HEK293 (cell line): ENCODE measurements at regions of chr19 and their contacts with region 1.

Region 1: GRCh38 chr19:27966390-27966816 is 1246.5 kb downstream of the UQCRFS1 start:
- H3K4me3 ChIP-seq: no peak overlapping the region
- H3K27ac ChIP-seq: no peak overlapping the region
- H3K4me1 ChIP-seq: 0 out of 2 replicates have a peak, but pooled peaks cover 2% of the 10 kb centered on the region
- CTCF ChIP-seq: peak; percentile 55; the same call in 1 of the 2 replicates

Region 2: GRCh38 chr19:27955485-27956480 is 10.6 kb before region 1 on chr19:
- CTCF ChIA-PET with region 1: interaction called, 57 read pairs
- POLR2A ChIA-PET with region 1: no interaction called
- H3K4me3 ChIP-seq: no peak overlapping the region
- H3K27ac ChIP-seq: no peak overlapping the region
- H3K4me1 ChIP-seq: peaks cover 7% of the 10 kb centered on the region; the same call in 1 of the 2 replicates
- CTCF ChIP-seq: no peak

Region 3: DNA sequence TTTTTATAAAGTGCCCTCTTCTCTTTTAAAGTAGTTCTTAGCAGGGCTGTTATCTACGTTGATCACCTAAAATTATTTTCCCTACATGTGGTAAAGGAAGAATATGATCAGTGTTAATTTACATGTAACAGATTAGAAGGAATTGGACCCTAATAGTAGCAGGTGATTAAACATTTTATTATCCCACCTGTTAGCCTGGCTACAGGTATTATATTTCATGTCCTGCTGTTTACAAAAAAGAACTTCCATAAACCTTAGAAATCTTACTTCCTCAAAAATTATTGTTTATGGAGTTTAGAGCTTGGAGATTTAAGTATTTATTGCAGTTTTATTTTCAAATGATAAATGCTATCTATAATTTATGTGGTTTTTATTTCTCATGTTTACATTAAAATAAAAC is 19.9 kb after region 1 on chr19:
- CTCF ChIA-PET with region 1: interaction called, 77 read pairs
- POLR2A ChIA-PET with region 1: no interaction called
- H3K4me3 ChIP-seq: no peak overlapping the region
- H3K27ac ChIP-seq: no peak overlapping the region
- H3K4me1 ChIP-seq: peaks cover 4% of the 10 kb centered on the region
- CTCF ChIP-seq: no peak

Region 4: DNA sequence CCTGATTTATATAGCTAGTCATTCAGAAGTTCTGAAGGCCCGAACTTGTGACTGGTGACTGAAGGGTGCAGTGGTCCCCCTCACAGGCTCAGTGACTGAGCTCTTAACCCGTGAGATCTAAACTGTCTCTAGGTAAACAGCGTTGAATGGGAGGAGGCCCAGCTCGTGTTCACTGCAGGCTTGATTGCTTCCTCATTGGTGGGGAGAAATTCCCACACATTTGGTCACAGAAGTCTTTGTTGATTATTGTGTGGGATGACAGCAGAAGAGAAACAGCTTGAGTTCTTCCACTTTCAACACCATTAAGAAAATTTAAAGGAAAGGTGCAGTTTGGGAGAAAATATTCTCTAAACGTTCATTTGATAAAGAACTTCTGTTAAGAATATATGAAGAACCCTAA is 68.5 kb after region 1 on chr19:
- CTCF ChIA-PET with region 1: no interaction called
- POLR2A ChIA-PET with region 1: no interaction called
- H3K4me3 ChIP-seq: no peak overlapping the region
- H3K27ac ChIP-seq: no peak overlapping the region
- H3K4me1 ChIP-seq: no peaks in the 10 kb centered on the region
- CTCF ChIP-seq: no peak